Activated T-helper 1 cell treated with anti-CD3 and anti-CD28 coated beads, Interleukin-12 subunit alpha, Interleukin-12 subunit beta, Interleukin-2, Interleukin-4 antibody, amounts not matched to agents 30 ng/mL and 10 ng/mL and 1 ng/mL, durations not matched to agents 14 hours and 24 hours and 36 hours (primary cell): ENCODE measurements at regions of chr3 and their contacts with region 1.

Region 1: GRCh38 chr3:160163229-160163878 is 61.9 kb upstream of the C3orf80 start:
- DNase-seq: no peak
- H3K4me3 Mint-ChIP-seq: no peak overlapping the region
- H3K27ac Mint-ChIP-seq: no peak overlapping the region
- H3K4me1 Mint-ChIP-seq: no peaks in the 10 kb centered on the region
- H3K27me3 Mint-ChIP-seq: peaks cover 13% of the 10 kb centered on the region

Region 2: GRCh38 chr3:160343132-160343531 is 179.8 kb after region 1 on chr3:
- intact Hi-C with region 1: loop called (anchors 5 kb)
- DNase-seq: no peak
- H3K4me3 Mint-ChIP-seq: no peak overlapping the region
- H3K27ac Mint-ChIP-seq: no peak overlapping the region
- H3K4me1 Mint-ChIP-seq: no peaks in the 10 kb centered on the region
- H3K27me3 Mint-ChIP-seq: no peaks in the 10 kb centered on the region

Region 3: GRCh38 chr3:160413613-160414248 is 250.4 kb after region 1 on chr3:
- intact Hi-C with region 1: loop called (anchors 1 kb)
- DNase-seq: peak; percentile 58
- H3K4me3 Mint-ChIP-seq: no peak overlapping the region
- H3K27ac Mint-ChIP-seq: no peak overlapping the region
- H3K4me1 Mint-ChIP-seq: peaks cover 49% of the 10 kb centered on the region
- H3K27me3 Mint-ChIP-seq: no peaks in the 10 kb centered on the region

Region 4: GRCh38 chr3:160486459-160486869 is 323.1 kb after region 1 on chr3:
- intact Hi-C with region 1: loop called (anchors 1 kb)
- DNase-seq: no peak
- H3K4me3 Mint-ChIP-seq: peak overlapping the region; percentile 78
- H3K27ac Mint-ChIP-seq: no peak overlapping the region
- H3K4me1 Mint-ChIP-seq: peaks cover 5% of the 10 kb centered on the region
- H3K27me3 Mint-ChIP-seq: peaks cover 2% of the 10 kb centered on the region

Region 5: DNA sequence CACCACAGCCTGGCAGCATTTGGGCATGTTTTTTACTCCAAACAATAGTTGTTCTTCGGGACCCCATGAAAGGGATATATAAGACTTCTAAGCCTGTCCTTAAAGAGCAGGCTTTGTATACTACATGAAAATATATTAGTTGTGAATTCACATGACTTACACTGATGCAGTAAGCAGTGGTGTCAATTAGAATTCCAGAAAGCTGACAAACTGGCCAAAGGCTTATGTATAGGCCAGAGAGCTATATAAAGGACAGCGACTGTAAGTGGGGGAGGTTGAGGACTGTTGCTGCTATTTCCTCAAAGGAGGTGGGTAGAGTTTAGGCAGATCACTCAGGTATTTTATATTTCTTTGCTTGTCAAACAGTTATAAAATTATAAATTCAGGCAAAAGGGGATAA is 377.2 kb after region 1 on chr3:
- intact Hi-C with region 1: no loop called
- DNase-seq: no peak
- H3K4me3 Mint-ChIP-seq: no peak overlapping the region
- H3K27ac Mint-ChIP-seq: no peak overlapping the region
- H3K4me1 Mint-ChIP-seq: peaks cover 30% of the 10 kb centered on the region
- H3K27me3 Mint-ChIP-seq: no peaks in the 10 kb centered on the region